Posterior vena cava (tissue), 2 donors: ENCODE measurements at regions of chr4 and their contacts with region 1.

Region 1: DNA sequence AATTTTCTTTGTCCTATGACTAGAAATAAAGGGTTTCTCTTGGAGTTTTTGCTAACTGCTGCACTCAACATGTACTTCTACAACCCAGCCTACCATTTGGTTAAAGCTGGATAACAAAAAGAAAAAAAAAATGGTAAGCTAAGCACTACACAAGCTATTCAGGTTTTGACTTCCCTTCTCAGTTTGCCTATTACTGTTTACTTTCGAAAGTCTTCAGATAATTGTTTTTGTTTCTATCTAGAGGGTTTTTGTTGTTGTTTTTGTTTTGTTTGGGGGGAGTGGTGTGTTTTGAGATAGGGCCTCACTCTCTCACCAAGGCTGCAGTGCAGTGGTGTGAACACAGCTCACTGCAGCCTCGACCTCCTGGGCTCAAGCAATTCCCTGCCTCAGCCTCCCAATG is 46.6 kb downstream of the CLOCK start:
- DNase-seq: no peak

Region 2: DNA sequence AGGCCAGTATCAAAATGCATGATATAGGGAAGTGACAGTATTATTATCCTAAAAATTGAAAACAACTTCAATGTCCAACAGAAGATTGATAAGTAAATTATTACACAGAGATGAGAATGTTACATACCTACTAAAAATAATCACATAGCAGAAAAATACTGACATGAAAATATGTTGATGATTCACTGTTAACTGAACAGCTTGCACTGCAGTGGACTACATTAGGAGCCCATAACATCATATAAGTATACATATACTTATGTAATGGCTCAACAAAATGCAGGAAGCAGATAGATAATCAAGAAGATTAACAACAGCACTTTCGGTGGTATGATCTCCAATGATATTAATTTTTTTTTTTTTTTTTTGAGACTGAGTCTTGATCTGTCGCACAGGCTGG is 39.6 kb after region 1 on chr4:
- intact Hi-C with region 1: loop called in 1 of 2 experiments (anchors 1 kb)
- DNase-seq: no peak